Prostate gland (tissue), 2 donors: ENCODE measurements at regions of chr2 and their contacts with region 1.

Region 1: DNA sequence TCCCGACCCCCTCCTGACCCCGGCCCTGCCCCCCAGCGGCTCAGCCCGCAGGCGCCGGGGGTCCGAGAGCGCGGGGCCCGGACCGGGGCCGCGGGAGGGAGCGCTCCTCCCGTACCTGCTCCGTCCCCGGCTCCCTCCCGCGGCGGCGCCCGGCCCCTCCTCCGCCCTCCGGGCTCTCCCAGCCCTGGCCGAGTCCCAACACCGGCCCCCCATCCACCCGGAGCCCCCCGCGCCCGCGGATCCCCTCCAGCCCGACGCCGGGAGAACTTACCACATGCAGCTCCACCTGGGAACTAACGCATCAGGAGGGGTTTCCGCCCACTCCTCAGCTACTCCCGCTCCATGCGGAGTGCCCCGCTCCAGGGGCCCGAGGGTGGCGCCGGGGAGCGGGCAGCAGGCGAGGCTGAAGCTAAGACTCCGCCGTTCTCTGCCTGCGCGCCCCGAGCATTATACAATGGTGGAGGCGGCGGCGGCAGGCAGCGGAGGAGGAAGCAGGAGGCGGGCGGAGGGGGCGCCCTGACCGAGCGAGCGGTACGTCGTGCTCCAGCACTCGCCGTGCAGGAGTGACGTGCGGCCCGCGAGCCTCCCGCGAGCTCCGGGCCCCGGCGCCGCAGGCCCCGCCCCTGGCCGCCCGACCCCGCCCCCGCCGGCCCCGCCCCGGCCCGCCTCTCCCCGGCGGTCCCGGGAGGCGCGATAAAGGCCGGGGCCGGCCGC is at the start of gene SERTAD2:
- DNase-seq: peak; percentile 87
- H3K4me3 ChIP-seq: peak within 1 kb of the TSS; percentile 94 to 96
- H3K27ac ChIP-seq: peak within 1 kb of the TSS; percentile 99
- H3K4me1 ChIP-seq: no peaks in the 10 kb centered on the region
- H3K27me3 ChIP-seq: no peaks in the 10 kb centered on the region
- CTCF ChIP-seq: peak in 1 of 4 experiments; percentile 2
- POLR2A ChIP-seq: peak; percentile 86
- total RNA-seq, gene SERTAD2: 15.3 to 26.0 TPM

Region 2: GRCh38 chr2:64453770-64454385 is 199.6 kb before region 1 on chr2 and contains the start of gene LGALSL:
- intact Hi-C with region 1: loop called (anchors 5 kb)
- DNase-seq: peak; percentile 87
- H3K4me3 ChIP-seq: peak within 1 kb of the TSS; percentile 88 to 91
- H3K27ac ChIP-seq: peak within 1 kb of the TSS; percentile 97 to 99
- H3K4me1 ChIP-seq: no peaks in the 10 kb centered on the region
- H3K27me3 ChIP-seq: no peaks in the 10 kb centered on the region
- CTCF ChIP-seq: peak in 1 of 4 experiments; percentile 3
- POLR2A ChIP-seq: peak; percentile 41
- total RNA-seq, gene LGALSL: 12.8 to 36.7 TPM

Region 3: DNA sequence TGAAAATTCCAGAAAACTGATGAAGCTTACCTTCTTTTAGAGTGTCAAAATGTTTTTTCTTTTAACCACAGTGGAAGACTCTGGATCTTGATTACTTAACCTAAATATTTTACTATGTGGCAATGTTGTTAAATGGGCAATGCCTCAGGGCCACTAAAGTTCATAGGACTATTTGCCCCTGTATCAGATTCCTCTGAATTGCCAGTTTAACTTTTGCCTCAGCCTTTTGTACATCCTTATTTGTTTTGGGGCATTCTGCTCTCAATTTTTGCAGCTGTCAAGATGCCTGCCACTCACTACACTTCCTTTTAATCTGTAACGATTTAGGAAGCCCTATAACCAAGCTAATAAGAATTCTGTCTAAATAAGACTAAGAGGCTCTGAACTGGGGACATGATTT is 31.9 kb after region 1 on chr2:
- intact Hi-C with region 1: no loop called
- DNase-seq: no peak
- H3K4me3 ChIP-seq: no peak overlapping the region
- H3K27ac ChIP-seq: no peak overlapping the region
- H3K4me1 ChIP-seq: no peaks in the 10 kb centered on the region
- H3K27me3 ChIP-seq: no peaks in the 10 kb centered on the region
- CTCF ChIP-seq: no peak
- POLR2A ChIP-seq: no peak

Region 4: GRCh38 chr2:64730551-64731262 is 77.2 kb after region 1 on chr2:
- intact Hi-C with region 1: no loop called
- DNase-seq: peak; percentile 71
- H3K4me3 ChIP-seq: peak overlapping the region; percentile 11 to 30
- H3K27ac ChIP-seq: peak overlapping the region; percentile 45 to 60
- H3K4me1 ChIP-seq: no peaks in the 10 kb centered on the region
- H3K27me3 ChIP-seq: no peaks in the 10 kb centered on the region
- CTCF ChIP-seq: no peak
- POLR2A ChIP-seq: no peak